Mammary epithelial cell (primary cell): ENCODE measurements at regions of chr19 and their contacts with region 1.

Region 1: GRCh38 chr19:48152551-48152950 is 17.6 kb downstream of the LIG1 start:
- DNase-seq: peak; percentile 20
- H3K4me3 ChIP-seq: no peak overlapping the region
- H3K27ac ChIP-seq: no peak overlapping the region
- H3K4me1 ChIP-seq: no peaks in the 10 kb centered on the region
- H3K27me3 ChIP-seq: no peaks in the 10 kb centered on the region
- CTCF ChIP-seq: peak; percentile 68 to 71

Region 2: DNA sequence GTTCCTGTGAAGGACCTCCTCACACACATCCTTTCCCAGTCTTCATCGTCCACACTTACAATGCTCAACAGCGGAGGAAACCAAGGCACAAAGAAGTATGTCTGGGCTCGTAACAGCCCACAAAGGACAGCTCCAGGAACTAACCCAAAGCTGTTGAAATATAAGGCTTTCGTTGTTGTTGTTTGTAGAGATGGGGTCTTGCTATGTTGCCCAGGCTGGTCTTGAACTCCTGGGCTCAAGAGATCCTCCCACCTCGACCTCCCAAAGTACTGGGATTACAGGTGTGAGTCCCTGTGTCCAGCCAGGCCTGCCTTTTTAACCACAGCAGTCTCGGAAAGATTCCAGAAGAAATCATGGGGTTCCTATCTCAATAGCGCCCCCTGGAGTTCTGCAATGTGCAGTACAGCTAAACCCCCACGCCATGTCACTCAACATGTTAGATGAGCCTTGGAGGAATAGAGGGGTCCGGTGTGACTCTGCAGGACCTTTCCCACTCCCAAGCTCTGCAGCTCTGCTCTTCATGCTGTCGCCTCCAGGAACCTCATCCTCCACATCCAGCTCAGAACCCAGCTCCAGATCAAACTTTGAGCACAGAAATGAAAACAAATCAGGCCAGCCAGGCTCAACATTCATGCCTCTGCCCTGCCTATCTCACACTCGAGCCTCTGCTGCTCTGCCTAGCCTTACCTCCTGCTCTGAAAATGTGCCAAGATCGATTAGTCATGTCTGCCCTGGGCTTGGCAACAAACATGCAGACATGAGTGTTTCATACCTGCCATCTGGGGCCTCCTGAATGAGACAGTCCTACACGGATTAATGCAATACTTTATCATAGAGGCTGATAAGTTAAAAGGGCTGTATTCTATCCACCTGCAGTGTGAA is 49.4 kb before region 1 on chr19:
- CTCF ChIA-PET with region 1: interaction called, 5 read pairs
- dilution Hi-C with region 1: no loop called
- in situ Hi-C with region 1: loop called (anchors 5 to 10 kb)
- intact Hi-C with region 1: loop called (anchors 1 kb)
- DNase-seq: peak; percentile 66
- H3K4me3 ChIP-seq: no peak overlapping the region
- H3K27ac ChIP-seq: no peak overlapping the region
- H3K4me1 ChIP-seq: peaks cover 4% of the 10 kb centered on the region
- H3K27me3 ChIP-seq: no peaks in the 10 kb centered on the region
- CTCF ChIP-seq: peak; percentile 74 to 77

Region 3: DNA sequence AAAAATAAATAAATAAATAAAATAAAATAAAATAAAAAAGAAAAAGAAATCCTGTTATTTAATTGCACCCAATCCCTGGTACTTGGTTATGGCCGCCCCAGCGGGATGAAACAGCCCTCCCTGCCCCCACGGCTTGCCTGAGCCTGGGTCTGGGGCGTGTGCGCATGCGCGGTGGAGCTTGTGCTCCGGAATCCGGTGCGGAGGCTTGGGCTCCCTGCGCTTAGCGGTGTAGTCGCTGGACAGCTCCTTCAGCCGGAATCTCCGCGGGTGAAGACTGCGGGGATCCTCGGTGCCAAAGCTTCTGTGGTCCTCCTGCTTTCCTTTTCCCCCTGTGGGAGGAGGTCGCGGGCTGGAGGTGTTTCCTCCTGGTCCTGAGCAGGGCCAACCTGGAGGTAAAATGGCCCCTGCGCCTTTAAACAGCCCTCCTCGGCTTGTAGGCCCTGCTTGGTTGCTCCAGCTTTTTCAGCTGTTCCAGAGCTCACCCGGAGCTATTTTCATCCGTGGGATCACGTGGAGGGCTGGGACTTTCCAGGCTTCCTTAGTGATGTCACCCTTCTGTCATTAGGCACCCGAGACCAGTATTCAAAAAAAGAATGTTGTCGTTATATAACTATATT is 42.1 kb before region 1 on chr19 and contains the start of gene PLA2G4C:
- CTCF ChIA-PET with region 1: interaction called, 5 read pairs
- dilution Hi-C with region 1: no loop called
- in situ Hi-C with region 1: loop called (anchors 5 to 10 kb)
- intact Hi-C with region 1: loop called (anchors 1 kb)
- DNase-seq: peak; percentile 85
- H3K4me3 ChIP-seq: peak within 1 kb of the TSS; percentile 42 to 44 (median 44)
- H3K27ac ChIP-seq: peak within 1 kb of the TSS; percentile 63
- H3K4me1 ChIP-seq: peaks cover 11% of the 10 kb centered on the region
- H3K27me3 ChIP-seq: no peaks in the 10 kb centered on the region
- CTCF ChIP-seq: no peak
- total RNA-seq, gene PLA2G4C: 2.7 to 3.2 TPM

Region 4: GRCh38 chr19:48123907-48124651 is 28.5 kb before region 1 on chr19:
- CTCF ChIA-PET with region 1: no interaction called
- dilution Hi-C with region 1: no loop called
- in situ Hi-C with region 1: no loop called
- intact Hi-C with region 1: loop called (anchors 1 kb)
- DNase-seq: peak; percentile 96
- H3K4me3 ChIP-seq: no peak overlapping the region
- H3K27ac ChIP-seq: peak overlapping the region; percentile 69
- H3K4me1 ChIP-seq: peaks cover 30% of the 10 kb centered on the region
- H3K27me3 ChIP-seq: no peaks in the 10 kb centered on the region
- CTCF ChIP-seq: peak; percentile 31 to 45